ENCODE measurements at regions of chr11 and their contacts with region 1.

Region 1: GRCh38 chr11:1917671-1918516 is 1.6 kb upstream of the TNNT3 start:
- DNase-seq: no peak
- ATAC-seq: peak; percentile 33
- H3K4me3 Mint-ChIP-seq: no peak overlapping the region
- H3K27ac Mint-ChIP-seq: no peak overlapping the region
- H3K4me1 Mint-ChIP-seq: peaks cover 7% of the 10 kb centered on the region
- H3K27me3 Mint-ChIP-seq: peaks cover 12% of the 10 kb centered on the region

Region 2: GRCh38 chr11:1837171-1838076 is 80.5 kb before region 1 on chr11:
- CTCF ChIA-PET with region 1: interaction called, 3 read pairs
- POLR2A ChIA-PET with region 1: no interaction called
- intact Hi-C with region 1: loop called (anchors 1 to 2 kb)
- DNase-seq: peak; percentile 89
- ATAC-seq: peak; percentile 91
- H3K4me3 Mint-ChIP-seq: no peak overlapping the region
- H3K27ac Mint-ChIP-seq: no peak overlapping the region
- H3K4me1 Mint-ChIP-seq: no peaks in the 10 kb centered on the region
- H3K27me3 Mint-ChIP-seq: no peaks in the 10 kb centered on the region

Region 3: GRCh38 chr11:1882519-1883238 is 35.2 kb before region 1 on chr11:
- CTCF ChIA-PET with region 1: interaction called, 5 read pairs
- POLR2A ChIA-PET with region 1: no interaction called
- intact Hi-C with region 1: loop called (anchors 5 kb)
- DNase-seq: peak; percentile 92
- ATAC-seq: peak; percentile 93
- H3K4me3 Mint-ChIP-seq: no peak overlapping the region
- H3K27ac Mint-ChIP-seq: no peak overlapping the region
- H3K4me1 Mint-ChIP-seq: peaks cover 2% of the 10 kb centered on the region
- H3K27me3 Mint-ChIP-seq: no peaks in the 10 kb centered on the region

Region 4: GRCh38 chr11:1889224-1890120 is 28.4 kb before region 1 on chr11:
- CTCF ChIA-PET with region 1: interaction called, 11 read pairs
- POLR2A ChIA-PET with region 1: no interaction called
- intact Hi-C with region 1: loop called (anchors 5 kb)
- DNase-seq: peak; percentile 87
- ATAC-seq: peak; percentile 78
- H3K4me3 Mint-ChIP-seq: peak overlapping the region; percentile 73
- H3K27ac Mint-ChIP-seq: peak overlapping the region; percentile 86
- H3K4me1 Mint-ChIP-seq: peaks cover 17% of the 10 kb centered on the region
- H3K27me3 Mint-ChIP-seq: no peaks in the 10 kb centered on the region

Region 5: GRCh38 chr11:1939006-1939625 is 21.2 kb after region 1 on chr11:
- CTCF ChIA-PET with region 1: no interaction called
- POLR2A ChIA-PET with region 1: no interaction called
- intact Hi-C with region 1: loop called in 1 of 2 experiments (anchors 1 kb)
- DNase-seq: peak; percentile 12
- ATAC-seq: no peak
- H3K4me3 Mint-ChIP-seq: no peak overlapping the region
- H3K27ac Mint-ChIP-seq: no peak overlapping the region
- H3K4me1 Mint-ChIP-seq: peaks cover 9% of the 10 kb centered on the region
- H3K27me3 Mint-ChIP-seq: no peaks in the 10 kb centered on the region